Activated naive CD4-positive, alpha-beta T cell treated with anti-CD3 and anti-CD28 coated beads for 36 hours (primary cell): ENCODE measurements at regions of chr9 and their contacts with region 1.

Region 1: DNA sequence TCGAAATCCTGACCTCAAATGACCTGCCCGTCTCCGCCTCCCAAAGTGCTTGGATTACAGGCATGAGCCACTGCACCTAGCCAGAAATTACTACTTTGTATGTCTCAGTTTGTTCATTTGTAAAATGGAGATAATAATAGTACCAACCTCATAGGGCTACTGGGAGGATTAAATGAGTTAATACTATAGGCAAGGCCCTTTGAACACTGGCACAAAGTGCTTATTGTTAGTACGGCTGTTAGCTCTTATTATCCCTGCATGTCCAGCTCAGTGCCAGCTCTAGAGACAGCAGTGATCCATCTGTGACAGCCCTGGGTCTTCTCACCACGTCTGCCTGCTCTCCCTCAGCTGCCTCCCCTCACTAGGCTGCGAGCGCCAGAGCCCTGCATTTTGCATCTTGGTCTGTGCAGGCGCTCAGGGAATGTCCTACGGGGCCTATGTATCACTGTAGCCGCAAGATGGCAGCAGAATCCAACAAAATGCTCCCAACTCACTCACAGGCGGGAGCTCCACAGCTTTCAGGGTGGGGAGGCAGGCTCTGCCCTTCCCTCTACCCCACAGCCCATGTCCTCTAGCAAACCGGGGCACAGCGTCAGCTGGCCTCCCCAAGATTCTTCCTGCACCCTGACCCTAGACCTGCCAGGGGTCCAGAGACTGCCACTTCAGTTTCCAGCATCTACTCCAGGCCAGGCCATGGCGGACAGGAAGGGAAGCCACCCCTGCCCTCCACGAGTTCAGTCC is 17.7 kb upstream of the AKNA start:
- DNase-seq: peak; percentile 91
- H3K4me3 Mint-ChIP-seq: no peak overlapping the region
- H3K27ac Mint-ChIP-seq: peak overlapping the region; percentile 48
- H3K4me1 Mint-ChIP-seq: peaks cover 5% of the 10 kb centered on the region
- H3K27me3 Mint-ChIP-seq: no peaks in the 10 kb centered on the region

Region 2: DNA sequence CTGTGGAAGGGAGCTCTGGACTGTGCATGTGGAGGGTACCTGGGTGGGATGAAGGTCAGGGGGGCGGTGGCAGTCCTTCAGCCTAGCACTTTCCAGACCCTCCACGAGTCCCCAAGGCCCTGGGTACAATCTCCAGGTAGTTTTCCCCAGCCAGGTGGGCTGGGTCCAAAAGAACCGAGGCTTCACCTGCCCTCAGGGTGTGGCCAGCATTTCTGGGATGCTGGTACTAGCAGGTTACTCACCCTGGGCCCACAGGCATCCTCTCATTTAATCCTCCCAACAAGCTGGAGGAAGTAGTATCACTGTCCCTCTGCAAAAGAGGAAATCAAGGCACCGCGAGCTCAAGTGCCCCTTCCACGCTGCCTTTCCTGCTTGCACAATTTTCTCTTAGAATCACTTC is 15.1 kb after region 1 on chr9:
- CTCF ChIA-PET with region 1: interaction called, 30 read pairs
- intact Hi-C with region 1: no loop called
- DNase-seq: no peak
- H3K4me3 Mint-ChIP-seq: no peak overlapping the region
- H3K27ac Mint-ChIP-seq: no peak overlapping the region
- H3K4me1 Mint-ChIP-seq: no peaks in the 10 kb centered on the region
- H3K27me3 Mint-ChIP-seq: no peaks in the 10 kb centered on the region

Region 3: GRCh38 chr9:114487607-114488300 is 82.3 kb after region 1 on chr9:
- CTCF ChIA-PET with region 1: interaction called, 14 read pairs
- intact Hi-C with region 1: loop called (anchors 1 kb)
- DNase-seq: peak; percentile 81
- H3K4me3 Mint-ChIP-seq: no peak overlapping the region
- H3K27ac Mint-ChIP-seq: no peak overlapping the region
- H3K4me1 Mint-ChIP-seq: peaks cover 19% of the 10 kb centered on the region
- H3K27me3 Mint-ChIP-seq: no peaks in the 10 kb centered on the region

Region 4: DNA sequence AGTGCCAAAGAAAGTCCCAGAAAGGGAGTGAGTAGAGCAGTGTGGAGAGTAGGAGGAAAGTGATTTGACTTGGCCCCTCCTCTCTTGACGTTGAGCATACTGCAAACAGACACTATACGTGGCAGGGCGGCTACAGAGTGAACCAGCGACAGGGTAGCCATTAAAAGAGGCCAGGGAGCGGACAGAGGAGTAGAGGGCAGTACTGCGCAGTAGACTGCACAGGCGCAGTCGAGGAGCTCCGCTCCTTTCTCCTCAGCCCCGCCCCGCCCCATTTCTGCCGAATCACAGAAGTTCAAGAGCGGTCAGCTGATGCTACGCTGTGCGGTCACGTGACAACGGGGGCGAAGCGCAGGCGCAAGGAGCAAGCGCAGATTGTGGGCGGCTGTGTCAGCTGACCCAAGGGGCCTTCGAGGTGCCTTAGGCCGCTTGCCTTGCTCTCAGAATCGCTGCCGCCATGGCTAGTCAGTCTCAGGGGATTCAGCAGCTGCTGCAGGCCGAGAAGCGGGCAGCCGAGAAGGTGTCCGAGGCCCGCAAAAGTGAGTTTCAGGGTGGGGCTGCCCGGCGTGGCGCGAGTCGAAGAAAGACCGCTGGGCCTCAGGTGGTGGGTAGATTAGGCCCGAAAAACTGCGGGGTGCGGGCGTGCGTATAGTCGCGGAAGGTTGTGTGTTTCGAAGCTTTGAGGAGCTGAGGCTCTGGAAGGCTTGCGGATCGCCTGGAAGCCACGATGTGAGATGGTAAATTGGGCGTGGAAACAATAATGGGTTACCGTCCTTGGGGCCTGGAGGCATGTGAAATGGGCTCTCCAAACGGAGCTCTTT is 182.1 kb after region 1 on chr9 and contains the start of gene ATP6V1G1:
- CTCF ChIA-PET with region 1: interaction called, 29 read pairs
- intact Hi-C with region 1: loop called (anchors 1 kb)
- DNase-seq: peak; percentile 100
- H3K4me3 Mint-ChIP-seq: peak within 1 kb of the TSS; percentile 92
- H3K27ac Mint-ChIP-seq: peak within 1 kb of the TSS; percentile 96
- H3K4me1 Mint-ChIP-seq: peaks cover 43% of the 10 kb centered on the region
- H3K27me3 Mint-ChIP-seq: no peaks in the 10 kb centered on the region
- total RNA-seq, gene ATP6V1G1: 26.7 to 28.8 TPM

Region 5: GRCh38 chr9:114662081-114662989 is 256.9 kb after region 1 on chr9:
- CTCF ChIA-PET with region 1: interaction called, 32 read pairs
- intact Hi-C with region 1: no loop called
- DNase-seq: peak; percentile 77
- H3K4me3 Mint-ChIP-seq: no peak overlapping the region
- H3K27ac Mint-ChIP-seq: no peak overlapping the region
- H3K4me1 Mint-ChIP-seq: peaks cover 14% of the 10 kb centered on the region
- H3K27me3 Mint-ChIP-seq: peaks cover 2% of the 10 kb centered on the region